ENCODE measurements at regions of chr17 and their contacts with region 1.

Region 1: GRCh38 chr17:74212913-74213791 is at the start of gene TTYH2:
- DNase-seq: peak; percentile 88 to 91 (median 90)
- ATAC-seq: peak; percentile 81
- H3K4me3 ChIP-seq: peak within 1 kb of the TSS; percentile 40
- H3K27ac ChIP-seq: peak within 1 kb of the TSS; percentile 61; the same call in 2 of the 3 replicates
- H3K4me1 ChIP-seq: peaks cover 30 to 43% of the 10 kb centered on the region in 2 experiments
- H3K27me3 ChIP-seq: no peaks in the 10 kb centered on the region
- CTCF ChIP-seq: peak; percentile 27 to 53 (median 47); a peak in 5 of 6 replicates
- EP300 ChIP-seq: no peak
- POLR2A ChIP-seq: no peak
- RAD21 ChIP-seq: peak in 1 of 2 experiments; percentile 53; a peak in 3 of 4 replicates
- polyA plus RNA-seq, gene TTYH2: 0.03 to 0.10 TPM

Region 2: GRCh38 chr17:74042744-74043486 is 170.2 kb before region 1 on chr17:
- CTCF ChIA-PET with region 1: no interaction called
- POLR2A ChIA-PET with region 1: no interaction called
- in situ Hi-C with region 1: no loop called
- intact Hi-C with region 1: no loop called
- DNase-seq: peak in 1 of 4 experiments; percentile 12
- ATAC-seq: no peak
- H3K4me3 ChIP-seq: no peak overlapping the region
- H3K27ac ChIP-seq: no peak overlapping the region
- H3K4me1 ChIP-seq: no peaks in the 10 kb centered on the region
- H3K27me3 ChIP-seq: peaks cover 2 to 38% of the 10 kb centered on the region in 2 experiments; a peak in 4 of 5 replicates
- CTCF ChIP-seq: no peak
- EP300 ChIP-seq: no peak
- POLR2A ChIP-seq: no peak
- RAD21 ChIP-seq: no peak

Region 3: DNA sequence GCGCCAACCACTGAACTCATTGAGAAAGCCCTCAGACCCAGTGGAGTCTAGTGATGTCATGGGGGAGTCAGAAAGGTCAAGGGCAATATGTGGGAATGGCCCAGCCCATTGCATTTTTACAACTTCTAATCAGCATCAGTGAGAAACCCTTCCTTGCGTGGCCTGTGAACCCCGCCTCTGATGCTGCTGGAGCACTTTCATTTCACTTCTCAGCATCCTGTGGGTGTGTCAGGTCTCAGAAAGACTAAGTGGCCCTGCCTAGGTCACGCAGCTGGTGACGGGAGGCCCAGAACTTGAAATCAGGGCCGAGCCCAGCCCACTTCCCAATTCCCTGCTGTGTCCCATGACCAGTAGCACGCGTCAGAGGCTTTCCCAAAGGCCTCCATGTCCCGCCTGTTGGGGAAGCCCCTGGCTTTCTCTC is 67.0 kb after region 1 on chr17:
- CTCF ChIA-PET with region 1: no interaction called
- POLR2A ChIA-PET with region 1: no interaction called
- in situ Hi-C with region 1: loop called (anchors 5 kb)
- intact Hi-C with region 1: loop called (anchors 5 kb)
- DNase-seq: no peak
- ATAC-seq: no peak
- H3K4me3 ChIP-seq: no peak overlapping the region
- H3K27ac ChIP-seq: no peak overlapping the region
- H3K4me1 ChIP-seq: peaks cover 14 to 24% of the 10 kb centered on the region in 2 experiments
- H3K27me3 ChIP-seq: peaks cover 10 to 16% of the 10 kb centered on the region in 2 experiments
- CTCF ChIP-seq: no peak
- EP300 ChIP-seq: no peak
- POLR2A ChIP-seq: no peak
- RAD21 ChIP-seq: no peak

Region 4: DNA sequence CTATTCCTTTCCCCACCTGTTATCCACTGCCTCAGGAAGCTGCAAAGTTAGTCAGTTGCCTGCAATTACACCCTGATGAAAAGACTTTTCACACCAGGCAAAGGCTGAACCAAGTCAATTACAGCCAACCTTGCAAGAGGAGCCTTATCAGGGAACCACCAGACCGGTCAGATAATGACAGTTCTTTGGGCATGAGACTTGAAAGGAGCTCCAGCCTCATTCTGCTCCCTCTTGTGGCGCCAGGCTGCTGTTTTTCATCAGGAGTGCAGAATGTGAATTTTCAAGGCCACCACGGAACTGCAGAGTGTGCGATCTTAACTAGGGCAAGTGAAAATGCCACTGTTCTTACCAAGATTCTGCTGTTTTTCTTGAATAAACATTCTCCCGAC is 83.4 kb after region 1 on chr17:
- CTCF ChIA-PET with region 1: interaction called, 6 read pairs
- POLR2A ChIA-PET with region 1: interaction called, 9 read pairs
- in situ Hi-C with region 1: no loop called
- intact Hi-C with region 1: loop called (anchors 1 kb)
- DNase-seq: peak; percentile 82 to 96 (median 85)
- ATAC-seq: peak; percentile 89
- H3K4me3 ChIP-seq: peak overlapping the region; percentile 10; the same call in 1 of the 2 replicates
- H3K27ac ChIP-seq: peak overlapping the region; percentile 91
- H3K4me1 ChIP-seq: peaks cover 14 to 21% of the 10 kb centered on the region in 2 experiments; a peak in 4 of 5 replicates
- H3K27me3 ChIP-seq: no peaks in the 10 kb centered on the region
- CTCF ChIP-seq: peak; percentile 87 to 91 (median 90)
- EP300 ChIP-seq: peak; percentile 81
- POLR2A ChIP-seq: no peak
- RAD21 ChIP-seq: peak; percentile 89 to 92

Region 5: DNA sequence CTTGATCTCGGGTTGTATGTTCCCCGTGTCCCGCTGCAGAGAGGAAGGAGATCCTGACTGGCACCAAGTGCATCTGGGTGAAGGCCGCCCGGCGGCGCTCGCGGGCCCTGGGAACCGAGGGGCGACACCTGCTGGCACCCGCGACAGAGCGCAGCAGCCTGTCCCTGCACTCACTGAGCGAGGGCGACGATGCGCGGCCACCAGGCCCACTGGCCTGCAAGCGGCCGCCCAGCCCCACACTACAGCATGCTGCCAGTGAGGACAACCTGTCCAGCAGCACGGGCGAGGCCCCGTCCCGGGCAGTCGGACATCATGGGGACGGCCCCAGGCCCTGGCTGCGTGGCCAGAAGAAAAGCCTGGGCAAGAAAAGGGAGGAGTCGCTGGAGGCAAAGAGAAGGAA is 141.0 kb after region 1 on chr17:
- CTCF ChIA-PET with region 1: interaction called, 6 read pairs
- POLR2A ChIA-PET with region 1: interaction called, 3 read pairs
- in situ Hi-C with region 1: loop called (anchors 5 kb)
- intact Hi-C with region 1: no loop called
- DNase-seq: peak; percentile 74 to 84 (median 84)
- ATAC-seq: peak; percentile 95
- H3K4me3 ChIP-seq: no peak overlapping the region
- H3K27ac ChIP-seq: no peak overlapping the region
- H3K4me1 ChIP-seq: peaks cover 0 to 43% of the 10 kb centered on the region in 2 experiments; a peak in 2 of 5 replicates
- H3K27me3 ChIP-seq: peaks cover 25 to 79% of the 10 kb centered on the region in 2 experiments; a peak in 4 of 5 replicates
- CTCF ChIP-seq: peak; percentile 97 to 100 (median 100)
- EP300 ChIP-seq: no peak
- POLR2A ChIP-seq: no peak
- RAD21 ChIP-seq: peak; percentile 77 to 96

Region 6: GRCh38 chr17:74361230-74362068 is 148.3 kb after region 1 on chr17 and contains the start of gene BTBD17:
- CTCF ChIA-PET with region 1: interaction called, 12 read pairs
- POLR2A ChIA-PET with region 1: interaction called, 3 read pairs
- in situ Hi-C with region 1: no loop called
- intact Hi-C with region 1: loop called (anchors 5 kb)
- DNase-seq: peak; percentile 67 to 83 (median 82)
- ATAC-seq: peak; percentile 99
- H3K4me3 ChIP-seq: no peak within 1 kb of the TSS
- H3K27ac ChIP-seq: no peak within 1 kb of the TSS
- H3K4me1 ChIP-seq: peaks cover 0 to 31% of the 10 kb centered on the region in 2 experiments; a peak in 2 of 5 replicates
- H3K27me3 ChIP-seq: peaks cover 14 to 62% of the 10 kb centered on the region in 2 experiments; a peak in 3 of 5 replicates
- CTCF ChIP-seq: peak; percentile 79 to 88 (median 86)
- EP300 ChIP-seq: no peak
- POLR2A ChIP-seq: no peak
- RAD21 ChIP-seq: peak; percentile 85 to 91
- polyA plus RNA-seq, gene BTBD17: not detected